ENCODE measurements at regions of chr4 and their contacts with region 1.

Region 1: GRCh38 chr4:54384563-54384962 is 155.5 kb downstream of the PDGFRA start:
- DNase-seq: peak in 1 of 2 donors; percentile 19
- H3K4me3 ChIP-seq: no peak overlapping the region
- H3K27ac ChIP-seq: no peak overlapping the region
- H3K4me1 ChIP-seq: no peaks in the 10 kb centered on the region
- H3K27me3 ChIP-seq: no peaks in the 10 kb centered on the region
- CTCF ChIP-seq: peak in 2 of 3 donors; percentile 20 to 48
- POLR2A ChIP-seq: no peak

Region 2: GRCh38 chr4:54368281-54369265 is 16.0 kb before region 1 on chr4:
- intact Hi-C with region 1: loop called (anchors 1 kb)
- DNase-seq: no peak
- H3K4me3 ChIP-seq: no peak overlapping the region
- H3K27ac ChIP-seq: no peak overlapping the region
- H3K4me1 ChIP-seq: no peaks in the 10 kb centered on the region
- H3K27me3 ChIP-seq: no peaks in the 10 kb centered on the region
- CTCF ChIP-seq: no peak
- POLR2A ChIP-seq: no peak

Measured in breast epithelium (tissue), 4 donors.